CD8-positive, alpha-beta T cell (primary cell): ENCODE measurements at regions of chr10 and their contacts with region 1.

Region 1: GRCh38 chr10:73743905-73744663 is at the start of gene SEC24C:
- DNase-seq: peak; percentile 91 to 99 (median 95)
- ATAC-seq: peak; percentile 89
- H3K4me3 ChIP-seq: peak within 1 kb of the TSS; percentile 78 to 79
- H3K4me3 Mint-ChIP-seq: peak within 1 kb of the TSS; percentile 100
- H3K27ac ChIP-seq: peak within 1 kb of the TSS; percentile 94
- H3K27ac Mint-ChIP-seq: peak within 1 kb of the TSS; percentile 100
- H3K4me1 ChIP-seq: peaks cover 31% of the 10 kb centered on the region
- H3K4me1 Mint-ChIP-seq: peaks cover 38% of the 10 kb centered on the region
- H3K27me3 ChIP-seq: no peaks in the 10 kb centered on the region
- H3K27me3 Mint-ChIP-seq: no peaks in the 10 kb centered on the region
- CTCF ChIP-seq: no peak
- total RNA-seq, gene SEC24C: 76.9 to 78.6 TPM

Region 2: DNA sequence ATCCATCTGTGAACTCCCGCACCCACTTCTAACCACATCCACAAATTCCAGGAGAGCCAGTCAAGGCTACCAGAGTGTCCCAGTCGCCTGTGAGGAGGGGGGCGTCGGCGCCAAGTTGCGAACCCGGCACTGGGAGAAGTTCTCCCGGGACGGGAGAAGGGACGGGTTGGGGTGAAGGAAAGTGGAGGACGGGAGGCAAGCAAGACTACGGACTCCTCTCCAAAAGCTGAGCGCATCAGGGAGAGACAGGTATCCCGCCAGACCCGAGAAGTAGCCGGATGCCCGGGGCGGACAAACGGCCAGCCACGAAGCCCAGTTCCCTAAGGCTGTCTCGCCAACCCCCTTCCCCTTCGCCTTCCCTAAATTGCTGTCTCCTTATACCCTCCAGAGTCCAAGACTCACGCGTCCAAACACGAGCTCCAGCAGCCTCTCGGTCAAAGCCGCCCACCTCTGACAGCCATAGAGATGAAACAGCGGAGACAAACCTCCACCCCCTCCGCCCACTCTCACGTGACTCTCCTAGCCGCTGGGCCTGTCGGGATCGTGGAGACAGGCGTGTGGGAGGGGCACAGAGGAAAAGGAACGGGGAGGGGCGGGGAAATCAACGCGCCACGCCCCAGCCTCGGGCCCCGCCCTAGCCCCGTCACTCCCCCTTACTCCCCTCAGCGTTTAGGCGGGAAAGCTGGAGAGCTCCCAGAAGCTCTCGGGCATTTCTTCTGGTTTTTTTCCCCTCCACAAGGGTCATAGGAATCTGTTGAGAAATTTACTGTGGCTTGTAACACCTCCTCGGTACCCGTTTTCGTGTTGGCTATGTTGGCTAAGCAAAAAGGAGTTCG is 1118.3 kb before region 1 on chr10 and contains the start of gene MICU1:
- CTCF ChIA-PET with region 1: no interaction called
- POLR2A ChIA-PET with region 1: no interaction called
- intact Hi-C with region 1: loop called in 1 of 2 experiments (anchors 5 kb)
- DNase-seq: peak; percentile 84 to 97 (median 93)
- ATAC-seq: peak; percentile 99
- H3K4me3 ChIP-seq: peak within 1 kb of the TSS; percentile 91 to 99
- H3K4me3 Mint-ChIP-seq: peak within 1 kb of the TSS; percentile 98
- H3K27ac ChIP-seq: peak within 1 kb of the TSS; percentile 63 to 64
- H3K27ac Mint-ChIP-seq: peak within 1 kb of the TSS; percentile 92
- H3K4me1 ChIP-seq: peaks cover 11% of the 10 kb centered on the region
- H3K4me1 Mint-ChIP-seq: peaks cover 23% of the 10 kb centered on the region
- H3K27me3 ChIP-seq: no peaks in the 10 kb centered on the region
- H3K27me3 Mint-ChIP-seq: no peaks in the 10 kb centered on the region
- CTCF ChIP-seq: no peak
- total RNA-seq, gene MICU1: 8.2 to 11.3 TPM

Region 3: GRCh38 chr10:73413528-73414229 is 330.4 kb before region 1 on chr10 and contains the start of gene ANXA7:
- CTCF ChIA-PET with region 1: no interaction called
- POLR2A ChIA-PET with region 1: no interaction called
- intact Hi-C with region 1: loop called in 1 of 2 experiments (anchors 1 kb)
- DNase-seq: peak; percentile 85 to 95 (median 94)
- ATAC-seq: peak; percentile 95
- H3K4me3 ChIP-seq: peak within 1 kb of the TSS; percentile 85 to 97
- H3K4me3 Mint-ChIP-seq: peak within 1 kb of the TSS; percentile 88
- H3K27ac ChIP-seq: peak within 1 kb of the TSS; percentile 95 to 96
- H3K27ac Mint-ChIP-seq: peak within 1 kb of the TSS; percentile 92
- H3K4me1 ChIP-seq: peaks cover 14% of the 10 kb centered on the region
- H3K4me1 Mint-ChIP-seq: peaks cover 47% of the 10 kb centered on the region
- H3K27me3 ChIP-seq: no peaks in the 10 kb centered on the region
- H3K27me3 Mint-ChIP-seq: no peaks in the 10 kb centered on the region
- CTCF ChIP-seq: no peak
- total RNA-seq, gene ANXA7: 94.8 to 95.6 TPM

Region 4: GRCh38 chr10:73759512-73760115 is 15.5 kb after region 1 on chr10:
- CTCF ChIA-PET with region 1: interaction called, 4 read pairs
- POLR2A ChIA-PET with region 1: interaction called, 13 read pairs
- intact Hi-C with region 1: loop called (anchors 2 kb)
- DNase-seq: peak in 8 of 9 experiments; percentile 43 to 94 (median 71)
- ATAC-seq: peak; percentile 90
- H3K4me3 ChIP-seq: peak overlapping the region in 1 of 2 experiments; percentile 28
- H3K4me3 Mint-ChIP-seq: peak overlapping the region; percentile 64
- H3K27ac ChIP-seq: peak overlapping the region; percentile 44 to 97
- H3K27ac Mint-ChIP-seq: peak overlapping the region; percentile 91
- H3K4me1 ChIP-seq: peaks cover 29% of the 10 kb centered on the region
- H3K4me1 Mint-ChIP-seq: peaks cover 66% of the 10 kb centered on the region
- H3K27me3 ChIP-seq: no peaks in the 10 kb centered on the region
- H3K27me3 Mint-ChIP-seq: no peaks in the 10 kb centered on the region
- CTCF ChIP-seq: no peak

Region 5: DNA sequence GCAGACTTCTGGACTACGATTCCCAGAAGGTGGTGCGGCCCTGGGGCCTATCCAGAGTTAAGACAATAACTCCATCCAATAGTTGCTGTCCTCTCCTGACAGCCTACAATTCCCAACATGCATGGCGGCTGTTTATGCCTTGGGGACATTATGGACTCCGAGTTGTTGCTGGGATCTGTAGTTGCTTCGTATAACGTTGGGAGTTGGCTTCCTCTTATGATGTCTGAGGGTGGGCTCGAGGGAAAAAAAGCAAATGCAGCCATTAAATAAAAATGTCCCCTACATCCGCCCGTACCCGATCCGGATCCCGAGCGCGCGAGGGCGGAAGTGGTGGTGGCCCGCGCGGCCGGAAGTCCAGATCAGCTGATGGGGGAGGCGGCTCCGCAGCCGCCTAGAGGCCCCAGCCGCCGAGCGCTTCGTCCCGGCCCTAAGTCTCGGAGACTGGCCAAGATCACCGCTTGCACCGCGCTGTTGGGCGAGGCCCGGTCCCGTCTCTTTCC is 41.2 kb after region 1 on chr10 and contains the start of gene ZSWIM8:
- CTCF ChIA-PET with region 1: interaction called, 6 read pairs
- POLR2A ChIA-PET with region 1: interaction called, 11 read pairs
- intact Hi-C with region 1: loop called (anchors 1 kb)
- DNase-seq: peak; percentile 70 to 96 (median 85)
- ATAC-seq: peak; percentile 84
- H3K4me3 ChIP-seq: peak within 1 kb of the TSS; percentile 68 to 81
- H3K4me3 Mint-ChIP-seq: peak within 1 kb of the TSS; percentile 99
- H3K27ac ChIP-seq: peak within 1 kb of the TSS; percentile 62 to 82
- H3K27ac Mint-ChIP-seq: peak within 1 kb of the TSS; percentile 95
- H3K4me1 ChIP-seq: peaks cover 41% of the 10 kb centered on the region
- H3K4me1 Mint-ChIP-seq: peaks cover 52% of the 10 kb centered on the region
- H3K27me3 ChIP-seq: no peaks in the 10 kb centered on the region
- H3K27me3 Mint-ChIP-seq: no peaks in the 10 kb centered on the region
- CTCF ChIP-seq: no peak
- total RNA-seq, gene ZSWIM8: 68.2 to 72.4 TPM